ENCODE measurements at regions of chr14 and their contacts with region 1.

Region 1: DNA sequence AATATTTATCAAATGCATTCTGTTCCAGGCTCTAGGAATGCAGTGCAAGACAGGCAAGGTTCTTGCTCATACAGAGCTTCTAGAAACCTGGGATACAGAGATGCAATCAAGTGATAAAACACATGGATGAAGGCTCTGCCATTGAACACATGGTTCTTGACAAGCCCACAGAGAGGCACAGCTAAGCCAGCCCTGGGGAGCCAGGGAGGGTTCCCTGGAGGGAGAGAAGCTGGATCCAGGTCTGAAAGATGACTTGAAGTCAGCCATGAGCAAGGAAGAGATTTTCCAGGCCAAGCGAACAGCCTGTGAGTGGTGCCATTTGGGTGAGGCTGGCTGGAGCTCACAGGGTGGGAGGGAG is 66.2 kb downstream of the IRF2BPL start:
- DNase-seq: no peak
- H3K4me3 Mint-ChIP-seq: peak overlapping the region; percentile 80
- H3K27ac Mint-ChIP-seq: peak overlapping the region; percentile 80
- H3K4me1 Mint-ChIP-seq: peaks cover 83% of the 10 kb centered on the region
- H3K27me3 Mint-ChIP-seq: peaks cover 26% of the 10 kb centered on the region

Region 2: GRCh38 chr14:76904740-76905438 is 57.4 kb before region 1 on chr14:
- intact Hi-C with region 1: no loop called
- DNase-seq: no peak
- H3K4me3 Mint-ChIP-seq: no peak overlapping the region
- H3K27ac Mint-ChIP-seq: no peak overlapping the region
- H3K4me1 Mint-ChIP-seq: peaks cover 18% of the 10 kb centered on the region
- H3K27me3 Mint-ChIP-seq: peaks cover 4% of the 10 kb centered on the region

Region 3: DNA sequence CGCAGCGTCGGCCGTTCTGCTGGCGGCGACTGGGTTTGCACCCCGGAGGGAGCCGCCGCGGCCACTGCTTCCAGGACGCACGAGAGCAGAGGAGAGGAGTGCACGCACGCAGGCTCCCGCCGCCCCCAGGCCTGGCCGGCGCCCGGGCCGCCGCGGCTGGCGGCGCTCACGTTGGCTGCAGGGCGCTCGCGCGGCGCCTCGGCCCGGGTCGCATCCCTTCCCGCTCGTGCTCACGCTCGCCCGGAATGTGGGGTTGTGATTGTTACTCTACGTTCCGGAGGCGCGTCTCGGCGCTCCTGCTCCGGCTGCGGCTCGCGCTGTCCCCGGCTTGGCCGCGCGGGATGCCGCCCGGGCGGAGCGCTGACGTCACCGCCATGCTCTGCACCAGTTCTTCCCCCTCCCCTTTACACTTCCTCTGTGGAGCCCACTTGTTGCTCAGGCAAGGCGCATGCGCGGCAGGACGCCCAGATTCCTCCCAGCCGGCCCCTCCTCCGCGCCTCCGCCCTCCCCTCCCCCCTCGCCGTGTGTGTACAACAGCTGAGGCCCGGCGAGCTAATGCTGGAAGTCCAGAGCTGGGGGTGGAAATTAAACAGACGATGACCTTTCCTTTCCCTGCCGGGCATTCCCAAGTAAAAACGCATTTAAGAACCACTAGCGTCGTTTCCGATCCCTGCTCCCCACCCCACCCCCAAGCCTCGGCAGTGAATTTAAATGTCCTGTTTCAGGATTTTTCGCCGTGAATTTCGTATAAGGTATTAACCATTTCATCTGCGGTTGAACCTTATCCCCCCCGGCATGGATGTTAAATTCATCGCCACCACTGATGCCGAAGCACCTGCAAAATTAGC is 66.3 kb after region 1 on chr14 and contains the start of gene IRF2BPL:
- intact Hi-C with region 1: loop called (anchors 1 kb)
- DNase-seq: peak; percentile 91
- H3K4me3 Mint-ChIP-seq: peak within 1 kb of the TSS; percentile 94
- H3K27ac Mint-ChIP-seq: peak within 1 kb of the TSS; percentile 97
- H3K4me1 Mint-ChIP-seq: peaks cover 57% of the 10 kb centered on the region
- H3K27me3 Mint-ChIP-seq: no peaks in the 10 kb centered on the region
- total RNA-seq, gene IRF2BPL: 24.9 and 26.5 TPM in 2 replicates